ENCODE measurements at regions of chr22 and their contacts with region 1.

Region 1: GRCh38 chr22:22201185-22201929 is 43.2 kb upstream of the VPREB1 start:
- H3K4me3 ChIP-seq: no peak overlapping the region
- H3K27ac ChIP-seq: no peak overlapping the region
- H3K4me1 ChIP-seq: no peaks in the 10 kb centered on the region
- CTCF ChIP-seq: peak; percentile 43; the same call in 1 of the 2 replicates

Region 2: GRCh38 chr22:22091400-22091878 is 109.9 kb before region 1 on chr22:
- CTCF ChIA-PET with region 1: no interaction called
- POLR2A ChIA-PET with region 1: no interaction called
- H3K4me3 ChIP-seq: no peak overlapping the region
- H3K27ac ChIP-seq: no peak overlapping the region
- H3K4me1 ChIP-seq: no peaks in the 10 kb centered on the region
- CTCF ChIP-seq: no peak

Region 3: DNA sequence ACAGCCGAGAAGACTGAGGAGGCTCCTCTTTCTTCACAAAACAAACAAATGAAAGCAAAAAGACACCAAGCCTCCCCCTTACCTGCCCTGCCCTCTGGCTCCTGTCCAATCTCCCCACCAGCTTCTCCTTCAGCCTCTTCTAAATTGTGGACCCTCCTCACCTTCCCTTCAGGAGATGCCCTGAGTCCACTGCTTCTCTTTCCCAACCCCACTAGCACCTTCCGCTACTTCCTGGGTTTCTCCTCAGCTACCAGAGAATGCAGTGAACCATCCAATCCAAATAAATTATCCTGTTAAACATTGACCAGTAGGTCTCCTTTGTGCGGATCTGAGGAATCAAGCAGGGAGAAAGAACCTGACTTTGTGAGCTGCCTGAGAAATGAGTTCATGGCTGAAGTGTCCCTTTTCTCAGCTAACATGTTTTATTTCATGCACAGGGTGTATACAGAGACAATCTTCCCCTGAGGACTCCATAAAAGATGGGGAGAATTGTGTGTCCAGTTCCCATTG is 20.0 kb before region 1 on chr22:
- CTCF ChIA-PET with region 1: interaction called, 76 read pairs
- POLR2A ChIA-PET with region 1: no interaction called
- H3K4me3 ChIP-seq: no peak overlapping the region
- H3K27ac ChIP-seq: no peak overlapping the region
- H3K4me1 ChIP-seq: no peaks in the 10 kb centered on the region
- CTCF ChIP-seq: no peak